ENCODE measurements at regions of chr12 and their contacts with region 1.

Region 1: GRCh38 chr12:105420659-105421240 is 90.3 kb downstream of the C12orf75 start:
- DNase-seq: peak; percentile 90
- H3K4me3 ChIP-seq: no peak overlapping the region
- H3K27ac ChIP-seq: peak overlapping the region; percentile 20
- H3K4me1 ChIP-seq: peaks cover 7% of the 10 kb centered on the region
- H3K27me3 ChIP-seq: no peaks in the 10 kb centered on the region
- CTCF ChIP-seq: peak; percentile 70 to 90
- POLR2A ChIP-seq: no peak

Region 2: GRCh38 chr12:105433804-105434203 is 13.1 kb after region 1 on chr12:
- CTCF ChIA-PET with region 1: interaction called, 12 read pairs
- POLR2A ChIA-PET with region 1: no interaction called
- dilution Hi-C with region 1: no loop called
- intact Hi-C with region 1: no loop called
- DNase-seq: peak; percentile 96
- H3K4me3 ChIP-seq: no peak overlapping the region
- H3K27ac ChIP-seq: peak overlapping the region; percentile 98
- H3K4me1 ChIP-seq: peaks cover 18% of the 10 kb centered on the region
- H3K27me3 ChIP-seq: no peaks in the 10 kb centered on the region
- CTCF ChIP-seq: no peak
- POLR2A ChIP-seq: no peak

Region 3: GRCh38 chr12:105480162-105480561 is 59.4 kb after region 1 on chr12:
- CTCF ChIA-PET with region 1: interaction called, 36 read pairs
- POLR2A ChIA-PET with region 1: interaction called, 3 read pairs
- dilution Hi-C with region 1: no loop called
- intact Hi-C with region 1: loop called (anchors 1 kb)
- DNase-seq: peak; percentile 80
- H3K4me3 ChIP-seq: no peak overlapping the region
- H3K27ac ChIP-seq: peak overlapping the region; percentile 53
- H3K4me1 ChIP-seq: peaks cover 81% of the 10 kb centered on the region
- H3K27me3 ChIP-seq: no peaks in the 10 kb centered on the region
- CTCF ChIP-seq: no peak
- POLR2A ChIP-seq: no peak

Region 4: DNA sequence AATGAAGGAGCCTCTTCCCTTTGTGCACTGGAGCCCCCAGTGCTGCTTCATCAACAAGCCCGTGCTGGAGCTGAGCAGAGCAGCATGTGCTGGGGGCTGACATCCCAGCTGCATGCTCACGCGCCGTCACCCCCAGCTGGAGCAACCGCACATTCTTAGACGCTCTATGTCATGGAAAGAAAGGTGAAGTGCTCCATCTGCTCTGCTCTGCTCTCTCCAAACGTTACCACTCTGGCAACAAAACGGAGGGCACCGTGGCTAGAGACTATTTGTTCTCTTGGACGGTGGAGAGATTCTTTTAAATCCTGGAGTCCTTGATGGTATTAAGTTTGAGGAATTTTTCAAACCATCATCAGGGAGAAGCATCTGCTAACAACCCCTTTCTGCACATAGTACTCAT is 118.1 kb after region 1 on chr12:
- CTCF ChIA-PET with region 1: interaction called, 25 read pairs
- POLR2A ChIA-PET with region 1: no interaction called
- dilution Hi-C with region 1: no loop called
- intact Hi-C with region 1: no loop called
- DNase-seq: no peak
- H3K4me3 ChIP-seq: no peak overlapping the region
- H3K27ac ChIP-seq: no peak overlapping the region
- H3K4me1 ChIP-seq: no peaks in the 10 kb centered on the region
- H3K27me3 ChIP-seq: no peaks in the 10 kb centered on the region
- CTCF ChIP-seq: no peak
- POLR2A ChIP-seq: peak; percentile 6

Region 5: GRCh38 chr12:105741744-105742566 is 321.2 kb after region 1 on chr12:
- CTCF ChIA-PET with region 1: no interaction called
- POLR2A ChIA-PET with region 1: no interaction called
- dilution Hi-C with region 1: no loop called
- intact Hi-C with region 1: loop called (anchors 2 kb)
- DNase-seq: peak; percentile 47
- H3K4me3 ChIP-seq: no peak overlapping the region
- H3K27ac ChIP-seq: no peak overlapping the region
- H3K4me1 ChIP-seq: peaks cover 32% of the 10 kb centered on the region
- H3K27me3 ChIP-seq: peaks cover 50 to 60% of the 10 kb centered on the region in 2 experiments
- CTCF ChIP-seq: no peak
- POLR2A ChIP-seq: no peak

Region 6: GRCh38 chr12:106205208-106206071 is 784.7 kb after region 1 on chr12:
- CTCF ChIA-PET with region 1: interaction called, 5 read pairs
- POLR2A ChIA-PET with region 1: no interaction called
- dilution Hi-C with region 1: no loop called
- intact Hi-C with region 1: loop called (anchors 5 kb)
- DNase-seq: no peak
- H3K4me3 ChIP-seq: no peak overlapping the region
- H3K27ac ChIP-seq: no peak overlapping the region
- H3K4me1 ChIP-seq: no peaks in the 10 kb centered on the region
- H3K27me3 ChIP-seq: peaks cover 0 to 13% of the 10 kb centered on the region in 2 experiments
- CTCF ChIP-seq: no peak
- POLR2A ChIP-seq: no peak

Measured in endothelial cell of umbilical vein (primary cell).